ENCODE measurements at regions of chr1 and their contacts with region 1.

Region 1: DNA sequence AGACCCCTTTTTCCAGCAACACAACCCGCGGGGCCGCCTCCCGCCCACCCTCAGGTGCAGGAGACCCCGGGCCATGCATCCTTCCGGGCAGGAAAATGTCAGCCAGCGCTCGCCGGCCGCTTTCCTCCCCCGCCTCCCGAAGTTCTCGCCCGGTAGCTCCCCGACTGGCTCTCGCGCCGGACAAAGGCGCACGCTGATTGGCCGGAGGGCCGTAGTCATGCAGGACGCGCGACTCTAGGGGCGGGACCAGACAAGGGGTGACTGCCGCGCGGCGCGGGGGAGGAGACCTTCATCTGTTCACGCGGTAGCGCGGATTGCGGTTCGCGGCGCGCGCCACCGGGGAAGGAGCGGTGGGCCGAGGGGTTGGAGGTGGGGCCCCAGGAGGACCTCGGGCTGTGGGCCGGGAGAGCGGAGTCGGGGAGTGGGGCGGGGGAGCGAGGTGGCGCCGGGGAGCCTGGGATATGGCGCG is at the start of gene FLVCR1:
- DNase-seq: peak; percentile 95 to 99
- H3K4me3 ChIP-seq: peak within 1 kb of the TSS; percentile 81 to 96
- H3K27ac ChIP-seq: peak within 1 kb of the TSS; percentile 85 to 94
- H3K4me1 ChIP-seq: peaks cover 6 to 9% of the 10 kb centered on the region in 2 donors
- H3K27me3 ChIP-seq: no peaks in the 10 kb centered on the region
- CTCF ChIP-seq: no peak
- total RNA-seq, gene FLVCR1: 5.7 TPM

Region 2: GRCh38 chr1:212035123-212035834 is 822.7 kb before region 1 on chr1 and contains the starts of genes DTL and INTS7:
- intact Hi-C with region 1: loop called (anchors 10 kb)
- DNase-seq: peak; percentile 96 to 99
- H3K4me3 ChIP-seq: peak within 1 kb of the TSS; percentile 64 to 78
- H3K27ac ChIP-seq: peak within 1 kb of the TSS; percentile 77 to 85
- H3K4me1 ChIP-seq: peaks cover 0 to 12% of the 10 kb centered on the region in 2 donors
- H3K27me3 ChIP-seq: no peaks in the 10 kb centered on the region
- CTCF ChIP-seq: peak; percentile 85 to 95 (median 90)
- total RNA-seq, gene DTL: not detected
- total RNA-seq, gene INTS7: 10.5 TPM

Region 3: GRCh38 chr1:212699104-212699624 is 158.9 kb before region 1 on chr1:
- intact Hi-C with region 1: loop called (anchors 1 kb)
- DNase-seq: peak in 1 of 2 donors; percentile 74
- H3K4me3 ChIP-seq: peak overlapping the region; percentile 73 to 90
- H3K27ac ChIP-seq: peak overlapping the region; percentile 81 to 88
- H3K4me1 ChIP-seq: peaks cover 5 to 13% of the 10 kb centered on the region in 2 donors
- H3K27me3 ChIP-seq: no peaks in the 10 kb centered on the region
- CTCF ChIP-seq: peak in 2 of 3 experiments; percentile 47 to 61

Region 4: GRCh38 chr1:212791676-212792395 is 66.2 kb before region 1 on chr1 and contains the starts of genes NSL1 and TATDN3:
- intact Hi-C with region 1: loop called (anchors 1 kb)
- DNase-seq: peak; percentile 45 to 92
- H3K4me3 ChIP-seq: peak within 1 kb of the TSS; percentile 71 to 94
- H3K27ac ChIP-seq: peak within 1 kb of the TSS; percentile 89 to 93
- H3K4me1 ChIP-seq: peaks cover 0 to 17% of the 10 kb centered on the region in 2 donors
- H3K27me3 ChIP-seq: no peaks in the 10 kb centered on the region
- CTCF ChIP-seq: no peak
- total RNA-seq, gene NSL1: 69.1 TPM
- total RNA-seq, gene TATDN3: 2.7 TPM

Region 5: DNA sequence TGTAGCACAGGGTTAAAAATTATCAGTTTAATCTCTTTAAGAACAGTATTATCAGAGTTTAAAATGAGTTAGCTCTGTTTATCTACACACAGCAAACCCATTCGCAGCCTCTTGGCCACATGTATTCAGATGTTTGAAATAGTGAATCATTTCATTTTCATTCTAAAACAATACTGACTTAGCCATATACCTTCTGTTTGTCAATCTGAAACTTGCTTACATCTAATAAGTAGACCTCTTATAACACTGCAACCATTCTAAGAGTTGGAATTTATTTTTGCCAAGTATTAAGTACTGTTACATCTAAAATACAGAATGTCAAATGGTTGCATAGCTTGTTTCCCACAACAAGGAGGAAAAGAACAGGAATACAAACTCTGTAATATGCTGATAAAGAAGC is 132.2 kb after region 1 on chr1:
- intact Hi-C with region 1: loop called (anchors 5 kb)
- DNase-seq: no peak
- H3K4me3 ChIP-seq: no peak overlapping the region
- H3K27ac ChIP-seq: no peak overlapping the region
- H3K4me1 ChIP-seq: no peaks in the 10 kb centered on the region
- H3K27me3 ChIP-seq: no peaks in the 10 kb centered on the region
- CTCF ChIP-seq: no peak

Region 6: GRCh38 chr1:213015099-213016050 is 157.3 kb after region 1 on chr1 and contains the start of gene ANGEL2:
- intact Hi-C with region 1: loop called (anchors 1 kb)
- DNase-seq: peak; percentile 90 to 98
- H3K4me3 ChIP-seq: peak within 1 kb of the TSS; percentile 74 to 81
- H3K27ac ChIP-seq: peak within 1 kb of the TSS; percentile 88 to 91
- H3K4me1 ChIP-seq: peaks cover 5 to 12% of the 10 kb centered on the region in 2 donors
- H3K27me3 ChIP-seq: no peaks in the 10 kb centered on the region
- CTCF ChIP-seq: no peak
- total RNA-seq, gene ANGEL2: 36.7 TPM

Region 7: DNA sequence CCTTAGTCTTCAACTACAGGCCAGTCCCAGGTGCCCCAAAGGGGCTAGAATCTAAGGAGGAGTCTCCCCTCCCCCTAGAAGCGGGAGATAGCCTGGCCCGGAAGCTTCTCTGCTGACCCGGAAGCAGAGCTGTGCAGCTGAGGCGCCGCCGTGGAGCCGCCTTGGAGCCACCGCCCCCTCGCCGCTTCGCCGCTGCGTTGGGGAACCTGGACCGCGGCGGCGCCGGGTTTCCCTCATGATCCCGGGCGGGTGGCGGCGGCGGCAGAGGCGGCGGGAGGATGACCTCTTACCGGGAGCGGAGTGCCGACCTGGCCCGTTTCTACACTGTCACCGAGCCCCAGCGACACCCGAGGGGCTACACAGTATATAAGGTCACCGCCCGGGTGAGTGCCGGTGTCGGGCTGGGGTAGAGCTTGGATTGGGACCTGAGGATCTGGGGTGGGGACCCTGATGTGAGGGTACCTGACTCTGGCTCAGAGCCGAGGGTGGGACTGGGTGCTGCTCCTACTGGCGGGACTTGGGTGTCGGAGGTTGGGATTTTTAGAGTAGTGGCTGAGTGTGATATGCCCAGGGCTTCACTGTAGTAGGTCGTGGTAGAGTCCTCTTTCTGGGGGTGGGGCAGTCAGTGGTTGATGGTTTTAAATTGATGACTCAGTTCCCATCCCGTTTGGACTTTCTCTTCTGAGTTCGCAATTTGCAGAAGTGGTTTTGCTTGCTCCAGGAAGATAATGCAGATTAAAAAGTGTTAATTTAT is 193.3 kb after region 1 on chr1 and contains the start of gene RPS6KC1:
- intact Hi-C with region 1: loop called (anchors 1 kb)
- DNase-seq: peak; percentile 10 to 88
- H3K4me3 ChIP-seq: peak within 1 kb of the TSS; percentile 75 to 92
- H3K27ac ChIP-seq: peak within 1 kb of the TSS; percentile 67 to 77
- H3K4me1 ChIP-seq: peaks cover 6 to 11% of the 10 kb centered on the region in 2 donors
- H3K27me3 ChIP-seq: no peaks in the 10 kb centered on the region
- CTCF ChIP-seq: no peak
- total RNA-seq, gene RPS6KC1: 21.0 TPM